CD8-positive, alpha-beta memory T cell (primary cell): ENCODE measurements at regions of chr13 and their contacts with region 1.

Region 1: GRCh38 chr13:32650705-32651311 is 64.6 kb downstream of the PDS5B start:
- DNase-seq: peak; percentile 28 to 68 (median 36)
- H3K4me3 ChIP-seq: no peak overlapping the region
- H3K4me3 Mint-ChIP-seq: no peak overlapping the region
- H3K27ac ChIP-seq: no peak overlapping the region
- H3K27ac Mint-ChIP-seq: peak overlapping the region in 1 of 8 donors; percentile 81
- H3K4me1 ChIP-seq: no peaks in the 10 kb centered on the region
- H3K4me1 Mint-ChIP-seq: peaks cover 37 to 61% (median 53%) of the 10 kb centered on the region in 3 donors
- H3K27me3 ChIP-seq: no peaks in the 10 kb centered on the region
- H3K27me3 Mint-ChIP-seq: no peaks in the 10 kb centered on the region

Region 2: GRCh38 chr13:32581177-32581786 is 69.5 kb before region 1 on chr13:
- CTCF ChIA-PET with region 1: interaction called, 26 read pairs
- POLR2A ChIA-PET with region 1: interaction called, 4 read pairs
- DNase-seq: peak in 2 of 5 donors; percentile 6 to 17
- H3K4me3 ChIP-seq: no peak overlapping the region
- H3K4me3 Mint-ChIP-seq: no peak overlapping the region
- H3K27ac ChIP-seq: no peak overlapping the region
- H3K27ac Mint-ChIP-seq: no peak overlapping the region
- H3K4me1 ChIP-seq: peaks cover 6% of the 10 kb centered on the region
- H3K4me1 Mint-ChIP-seq: peaks cover 10 to 11% (median 10%) of the 10 kb centered on the region in 3 donors
- H3K27me3 ChIP-seq: no peaks in the 10 kb centered on the region
- H3K27me3 Mint-ChIP-seq: peaks cover 0 to 4% of the 10 kb centered on the region in 2 donors

Region 3: DNA sequence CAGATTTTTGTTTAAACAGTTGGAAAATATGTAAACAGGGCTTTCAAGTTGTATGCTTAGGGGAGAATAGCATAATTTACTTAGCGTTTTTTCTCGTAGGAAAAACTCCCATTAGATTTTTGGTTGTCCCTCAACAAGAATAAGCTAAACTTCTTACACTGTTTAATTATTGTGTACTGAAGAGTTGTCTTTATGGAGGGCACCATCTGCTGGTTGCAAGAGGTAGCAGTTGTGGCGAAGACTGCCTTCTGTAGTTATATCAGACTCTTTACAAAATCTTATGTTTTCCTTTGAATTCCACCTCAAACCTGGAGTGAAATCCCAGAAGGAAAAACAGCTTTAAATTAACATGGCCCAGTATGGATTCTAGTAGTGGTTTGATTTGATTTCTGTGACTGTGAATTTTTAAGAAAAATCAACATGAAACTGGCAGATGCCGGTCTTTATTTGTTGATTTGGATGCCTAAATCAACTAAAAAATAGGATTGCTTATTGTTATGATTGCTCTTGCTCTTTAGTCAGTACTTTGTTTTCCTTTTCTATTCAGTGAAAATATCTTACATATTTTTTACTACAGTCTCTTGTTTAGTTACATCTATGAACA is 11.2 kb before region 1 on chr13:
- CTCF ChIA-PET with region 1: interaction called, 11 read pairs
- POLR2A ChIA-PET with region 1: no interaction called
- DNase-seq: peak; percentile 19 to 72 (median 44)
- H3K4me3 ChIP-seq: no peak overlapping the region
- H3K4me3 Mint-ChIP-seq: no peak overlapping the region
- H3K27ac ChIP-seq: no peak overlapping the region
- H3K27ac Mint-ChIP-seq: no peak overlapping the region
- H3K4me1 ChIP-seq: peaks cover 14% of the 10 kb centered on the region
- H3K4me1 Mint-ChIP-seq: peaks cover 22 to 38% (median 37%) of the 10 kb centered on the region in 3 donors
- H3K27me3 ChIP-seq: no peaks in the 10 kb centered on the region
- H3K27me3 Mint-ChIP-seq: no peaks in the 10 kb centered on the region